SK-N-SH (cell line): ENCODE measurements at regions of chr15 and their contacts with region 1.

Region 1: GRCh38 chr15:43376017-43376705 is 5.3 kb downstream of the TUBGCP4 start:
- DNase-seq: peak; percentile 62
- H3K4me3 ChIP-seq: no peak overlapping the region; a peak in 1 of 4 replicates
- H3K27ac ChIP-seq: no peak overlapping the region
- H3K4me1 ChIP-seq: peaks cover 0 to 5% of the 10 kb centered on the region in 2 experiments; a peak in 2 of 4 replicates
- H3K27me3 ChIP-seq: no peaks in the 10 kb centered on the region
- CTCF ChIP-seq: peak; percentile 80
- EP300 ChIP-seq: no peak
- RAD21 ChIP-seq: peak; percentile 32

Region 2: DNA sequence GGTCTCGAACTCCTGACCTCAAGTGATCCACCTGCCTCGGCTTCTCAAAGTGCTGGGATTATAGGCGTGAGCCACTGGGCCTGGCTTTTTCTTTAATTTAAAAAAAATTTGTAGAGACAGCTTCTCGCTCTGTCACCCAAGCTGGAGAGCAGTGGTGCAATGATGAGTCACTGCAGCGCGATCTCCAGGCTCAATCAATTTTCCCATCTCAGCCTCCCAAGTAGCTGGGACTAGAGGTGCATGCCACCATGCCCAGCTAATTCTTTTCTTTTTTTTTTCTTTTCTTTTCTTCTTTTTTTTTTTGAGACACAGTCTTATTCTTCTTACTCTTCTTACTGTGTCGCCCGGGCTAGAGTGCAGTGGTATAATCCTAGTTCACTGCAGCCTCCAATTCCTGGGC is 14.6 kb after region 1 on chr15:
- CTCF ChIA-PET with region 1: interaction called, 12 read pairs
- POLR2A ChIA-PET with region 1: no interaction called
- DNase-seq: no peak
- H3K4me3 ChIP-seq: no peak overlapping the region
- H3K27ac ChIP-seq: no peak overlapping the region
- H3K4me1 ChIP-seq: no peaks in the 10 kb centered on the region
- H3K27me3 ChIP-seq: no peaks in the 10 kb centered on the region
- CTCF ChIP-seq: no peak
- EP300 ChIP-seq: no peak
- RAD21 ChIP-seq: no peak